ENCODE measurements at regions of chr14 and their contacts with region 1.

Region 1: DNA sequence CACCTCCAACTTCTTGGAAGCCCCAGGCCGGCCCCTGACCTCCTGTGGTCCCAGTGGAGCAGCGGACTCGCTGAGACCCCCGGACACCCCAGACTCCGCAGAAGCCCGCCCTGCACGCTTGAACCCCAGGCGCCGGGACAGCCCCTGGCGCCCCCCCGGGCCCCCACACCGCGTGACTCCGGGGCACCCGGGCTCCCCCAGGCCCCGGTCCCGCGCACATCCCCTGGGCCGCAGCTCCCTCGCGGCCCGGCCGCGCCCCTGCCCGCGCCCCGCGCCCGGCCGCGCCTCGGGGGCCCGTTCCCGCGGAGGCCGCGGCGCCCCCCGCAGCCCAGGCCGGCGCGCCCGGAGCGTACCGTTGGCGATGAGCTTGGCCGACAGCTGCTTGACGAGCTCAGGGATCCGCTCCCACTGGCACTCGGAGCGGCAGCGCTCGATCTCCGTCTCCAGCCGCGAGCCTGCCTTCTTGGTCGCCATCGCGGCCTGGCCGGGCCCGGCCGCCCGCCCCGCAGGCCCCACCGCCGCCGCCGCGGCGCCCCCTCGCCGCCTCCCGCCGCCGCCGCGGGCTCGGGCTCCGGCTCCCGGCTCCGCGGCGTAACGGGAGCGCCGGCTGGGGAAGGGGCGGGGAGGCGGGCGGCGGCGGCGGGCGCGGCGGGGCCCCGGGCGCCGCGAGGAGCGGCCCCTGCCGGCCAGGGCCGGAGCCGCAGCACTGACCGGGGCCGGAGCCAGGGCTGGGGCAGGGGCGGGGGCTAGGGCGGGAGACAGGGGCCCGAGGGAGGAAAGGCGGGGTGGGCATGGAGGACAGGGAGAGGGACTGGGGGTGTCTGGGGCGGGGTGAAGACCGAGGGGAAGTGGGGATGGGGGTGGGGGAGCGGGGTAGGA is at the start of gene TTC7B:
- DNase-seq: no peak
- total RNA-seq, gene TTC7B: 64.9 TPM

Region 2: DNA sequence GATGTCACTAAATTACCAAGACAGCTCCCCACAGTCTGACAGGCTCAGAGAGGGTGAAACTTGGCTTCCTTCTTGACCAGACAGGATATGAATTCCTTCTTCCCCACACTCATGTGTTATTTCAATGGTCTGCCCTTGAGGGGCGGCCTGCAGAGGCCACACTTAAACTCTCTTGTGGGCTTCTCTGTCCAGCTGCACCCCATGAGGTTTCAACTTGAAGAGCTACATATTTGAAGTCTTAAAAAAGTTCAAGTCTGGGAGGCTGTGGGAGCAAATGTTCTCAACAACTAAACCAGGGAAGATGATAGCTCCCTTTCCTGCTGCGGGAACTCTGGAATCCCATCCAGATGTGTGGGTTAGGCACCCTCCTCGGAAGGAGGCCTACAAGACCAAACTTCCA is 98.1 kb before region 1 on chr14:
- intact Hi-C with region 1: loop called (anchors 5 kb)
- DNase-seq: no peak

Region 3: GRCh38 chr14:90924621-90925345 is 108.7 kb after region 1 on chr14:
- intact Hi-C with region 1: no loop called
- DNase-seq: no peak

Measured in cardiac septum (tissue), 1 donor.